Endothelial cell of umbilical vein (primary cell): ENCODE measurements at regions of chr3 and their contacts with region 1.

Region 1: DNA sequence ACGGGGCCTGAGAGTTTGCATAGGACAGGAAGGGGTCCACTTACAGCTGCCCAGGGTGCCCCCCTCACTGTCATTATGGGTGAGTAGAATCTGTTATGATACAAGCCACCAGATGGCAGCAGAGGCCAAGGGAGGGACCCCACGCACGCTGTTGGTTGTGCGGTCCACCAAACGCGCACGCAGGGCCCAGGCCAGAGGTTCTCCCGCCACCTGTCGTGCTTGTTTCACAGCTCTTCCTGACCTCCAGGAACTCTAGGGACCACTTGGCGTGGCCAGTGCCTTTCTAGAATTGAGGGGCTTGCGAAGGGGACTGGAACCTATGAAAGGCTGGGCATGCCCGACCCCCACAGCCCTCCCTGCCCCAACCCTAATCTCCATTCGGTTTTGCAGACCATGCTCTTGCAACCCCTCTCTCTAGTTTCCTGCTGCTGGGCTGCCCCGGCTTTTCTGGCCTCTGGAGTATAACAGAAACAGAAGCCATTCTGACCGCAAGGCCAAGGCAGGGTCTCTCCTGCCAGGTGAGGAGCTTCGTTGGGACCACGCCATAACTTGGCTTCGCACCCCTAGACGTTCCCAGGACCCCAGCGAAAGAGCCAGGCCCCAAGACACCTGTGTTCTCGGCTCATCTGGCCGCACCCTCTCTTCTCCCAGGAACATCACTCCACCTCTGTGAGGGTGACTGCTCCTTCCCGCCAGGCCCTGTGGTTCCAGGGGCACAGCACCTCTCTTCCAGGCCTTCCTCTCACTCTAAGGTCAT is 46.0 kb downstream of the ALDH1L1 start:
- DNase-seq: peak; percentile 42
- H3K4me3 ChIP-seq: no peak overlapping the region
- H3K27ac ChIP-seq: no peak overlapping the region
- H3K4me1 ChIP-seq: peaks cover 8% of the 10 kb centered on the region
- H3K27me3 ChIP-seq: peaks cover 0 to 2% of the 10 kb centered on the region in 2 experiments
- CTCF ChIP-seq: peak; percentile 51 to 74
- POLR2A ChIP-seq: no peak

Region 2: DNA sequence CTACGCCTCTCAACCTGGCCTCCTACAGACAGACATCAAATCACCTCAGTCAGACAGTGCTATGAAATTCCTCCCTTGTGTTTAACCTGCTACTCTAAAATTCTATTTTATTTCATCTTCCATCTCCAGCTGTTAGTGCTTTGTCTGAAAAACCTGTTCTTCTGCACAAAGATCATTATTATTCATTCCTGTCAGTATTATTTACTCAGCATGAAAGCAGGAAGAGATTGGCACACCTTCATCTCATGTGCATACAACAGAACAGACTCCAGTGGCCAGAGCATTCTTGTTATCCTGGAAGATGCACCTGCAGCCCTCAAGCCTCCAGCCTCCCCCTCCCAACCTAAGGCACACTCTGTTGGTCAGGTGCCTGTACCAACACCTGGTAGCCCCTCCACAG is 167.3 kb before region 1 on chr3:
- CTCF ChIA-PET with region 1: interaction called, 3 read pairs
- POLR2A ChIA-PET with region 1: no interaction called
- dilution Hi-C with region 1: no loop called
- intact Hi-C with region 1: loop called (anchors 5 kb)
- DNase-seq: no peak
- H3K4me3 ChIP-seq: no peak overlapping the region
- H3K27ac ChIP-seq: no peak overlapping the region
- H3K4me1 ChIP-seq: no peaks in the 10 kb centered on the region
- H3K27me3 ChIP-seq: peaks cover 23 to 34% of the 10 kb centered on the region in 2 experiments
- CTCF ChIP-seq: no peak
- POLR2A ChIP-seq: no peak

Region 3: GRCh38 chr3:126197854-126198584 is 63.6 kb after region 1 on chr3:
- CTCF ChIA-PET with region 1: interaction called, 68 read pairs
- POLR2A ChIA-PET with region 1: no interaction called
- dilution Hi-C with region 1: no loop called
- intact Hi-C with region 1: loop called (anchors 1 kb)
- DNase-seq: peak; percentile 66
- H3K4me3 ChIP-seq: no peak overlapping the region
- H3K27ac ChIP-seq: no peak overlapping the region
- H3K4me1 ChIP-seq: peaks cover 5% of the 10 kb centered on the region
- H3K27me3 ChIP-seq: peaks cover 0 to 2% of the 10 kb centered on the region in 2 experiments
- CTCF ChIP-seq: peak; percentile 72 to 86
- POLR2A ChIP-seq: no peak

Region 4: DNA sequence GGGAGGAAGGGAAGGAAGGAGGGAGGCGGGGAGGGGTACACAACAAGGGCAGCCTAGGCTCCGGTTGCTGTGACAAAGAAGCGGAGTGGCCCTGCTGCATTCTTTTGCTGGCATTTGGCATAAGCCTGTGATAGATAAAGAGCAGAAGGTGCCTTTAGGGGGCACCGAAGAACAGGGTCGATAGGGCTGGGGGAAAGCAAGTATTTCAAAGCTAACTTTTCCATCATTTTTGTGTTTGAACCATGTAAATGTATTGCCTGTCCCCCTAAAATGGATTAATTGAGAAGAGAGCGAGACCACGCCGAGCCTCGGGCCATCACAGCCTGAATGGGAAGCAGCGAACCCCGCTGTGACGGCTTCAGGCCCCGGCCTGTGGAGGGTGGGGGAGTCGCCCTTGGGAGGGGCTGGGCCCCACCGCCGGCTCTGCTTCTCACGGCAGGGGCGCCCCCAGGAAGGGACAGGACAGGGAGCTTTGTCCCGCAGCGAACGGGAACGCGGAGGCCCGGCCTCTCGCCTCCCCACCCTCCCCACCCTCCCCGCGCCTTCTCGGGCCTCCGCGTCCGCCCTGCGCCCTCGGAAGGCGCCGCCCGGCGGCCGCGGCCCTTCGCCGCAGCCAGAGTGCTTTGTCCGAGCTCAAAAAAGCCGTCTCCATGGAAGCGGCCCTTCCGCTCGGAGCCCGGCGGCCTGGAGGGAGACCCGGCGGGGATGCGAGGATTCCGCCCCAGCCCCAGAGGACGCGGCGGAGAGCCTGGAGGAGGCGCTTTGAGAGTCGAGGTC is 78.4 kb after region 1 on chr3:
- CTCF ChIA-PET with region 1: interaction called, 3 read pairs
- POLR2A ChIA-PET with region 1: no interaction called
- dilution Hi-C with region 1: no loop called
- intact Hi-C with region 1: loop called (anchors 5 kb)
- DNase-seq: peak; percentile 47
- H3K4me3 ChIP-seq: peak overlapping the region in 2 of 3 experiments; percentile 31 to 34
- H3K27ac ChIP-seq: no peak overlapping the region
- H3K4me1 ChIP-seq: peaks cover 11% of the 10 kb centered on the region
- H3K27me3 ChIP-seq: peaks cover 24 to 29% of the 10 kb centered on the region in 2 experiments
- CTCF ChIP-seq: peak; percentile 29 to 61
- POLR2A ChIP-seq: no peak

Region 5: GRCh38 chr3:126245811-126246727 is 111.7 kb after region 1 on chr3:
- CTCF ChIA-PET with region 1: interaction called, 10 read pairs
- POLR2A ChIA-PET with region 1: no interaction called
- dilution Hi-C with region 1: no loop called
- intact Hi-C with region 1: loop called (anchors 1 kb)
- DNase-seq: peak; percentile 54
- H3K4me3 ChIP-seq: no peak overlapping the region
- H3K27ac ChIP-seq: no peak overlapping the region
- H3K4me1 ChIP-seq: no peaks in the 10 kb centered on the region
- H3K27me3 ChIP-seq: peaks cover 9 to 17% of the 10 kb centered on the region in 2 experiments
- CTCF ChIP-seq: peak; percentile 45 to 51
- POLR2A ChIP-seq: no peak

Region 6: DNA sequence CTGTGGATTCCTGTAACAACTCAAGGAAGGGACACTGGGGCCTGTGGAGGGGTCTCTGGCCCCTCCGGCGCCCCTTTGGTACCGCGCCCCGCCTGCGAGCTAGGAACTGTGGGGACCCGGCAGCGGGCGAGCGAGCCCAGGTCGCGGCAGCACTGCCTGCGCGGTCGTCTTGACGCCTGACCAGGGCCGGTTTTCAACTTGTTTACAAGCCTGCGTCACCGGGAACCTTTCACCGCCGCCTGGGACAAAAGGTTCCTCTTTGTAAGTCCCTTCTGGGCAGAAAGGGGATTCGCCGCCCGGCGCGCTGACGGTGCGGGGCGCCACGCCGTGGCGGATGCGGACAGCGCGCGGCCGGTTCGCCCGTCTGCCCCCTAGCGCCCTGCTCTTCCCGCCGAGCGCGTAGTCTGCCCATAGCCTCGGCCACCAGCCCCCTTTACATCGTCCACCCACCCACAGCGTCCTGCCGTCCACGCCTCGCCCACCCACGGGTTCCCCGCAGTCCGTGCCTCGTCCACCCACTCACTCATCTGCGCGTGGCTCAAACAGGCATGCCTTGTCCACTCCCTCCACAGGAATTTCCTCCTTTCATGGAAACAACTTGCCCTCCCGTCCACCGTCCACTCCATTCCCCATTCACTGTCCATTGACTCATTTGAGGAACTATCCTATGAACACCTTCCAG is 254.9 kb after region 1 on chr3:
- CTCF ChIA-PET with region 1: interaction called, 30 read pairs
- POLR2A ChIA-PET with region 1: no interaction called
- dilution Hi-C with region 1: no loop called
- intact Hi-C with region 1: loop called (anchors 1 kb)
- DNase-seq: peak; percentile 84
- H3K4me3 ChIP-seq: peak overlapping the region in 1 of 3 experiments; percentile 16
- H3K27ac ChIP-seq: no peak overlapping the region
- H3K4me1 ChIP-seq: no peaks in the 10 kb centered on the region
- H3K27me3 ChIP-seq: peaks cover 13 to 18% of the 10 kb centered on the region in 2 experiments
- CTCF ChIP-seq: peak; percentile 94 to 96
- POLR2A ChIP-seq: no peak